Ovary (tissue), 10 donors: ENCODE measurements at regions of chr3 and their contacts with region 1.

Region 1: DNA sequence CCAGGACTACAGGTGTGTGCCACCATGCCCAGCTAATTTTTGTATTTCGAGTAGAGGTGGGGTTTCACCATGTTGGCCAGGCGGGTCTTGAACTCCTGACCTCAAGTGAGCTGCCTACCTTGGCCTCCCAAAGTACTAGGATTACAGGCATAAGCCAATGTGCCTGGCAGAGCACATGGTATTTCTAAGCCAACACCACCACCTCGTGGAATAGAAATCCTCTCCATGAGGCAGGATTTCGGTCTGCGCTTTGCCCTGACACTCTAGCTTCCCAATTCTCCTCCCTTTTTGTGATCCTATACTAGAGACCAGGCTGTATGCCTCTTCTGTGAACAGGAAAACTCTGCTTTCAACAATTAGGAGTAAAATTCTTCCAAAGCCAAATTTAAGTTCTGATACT is 372.2 kb downstream of the VGLL3 start:
- DNase-seq: no peak
- H3K4me3 ChIP-seq: no peak overlapping the region
- H3K27ac ChIP-seq: no peak overlapping the region
- H3K4me1 ChIP-seq: no peaks in the 10 kb centered on the region
- H3K27me3 ChIP-seq: no peaks in the 10 kb centered on the region
- CTCF ChIP-seq: no peak
- EP300 ChIP-seq: no peak
- POLR2A ChIP-seq: no peak

Region 2: GRCh38 chr3:86605166-86605565 is 13.5 kb before region 1 on chr3:
- intact Hi-C with region 1: loop called in 1 of 4 experiments (anchors 1 kb)
- DNase-seq: no peak
- H3K4me3 ChIP-seq: no peak overlapping the region
- H3K27ac ChIP-seq: no peak overlapping the region
- H3K4me1 ChIP-seq: no peaks in the 10 kb centered on the region
- H3K27me3 ChIP-seq: no peaks in the 10 kb centered on the region
- CTCF ChIP-seq: no peak
- EP300 ChIP-seq: no peak
- POLR2A ChIP-seq: no peak

Region 3: GRCh38 chr3:87006844-87007439 is 388.2 kb after region 1 on chr3:
- intact Hi-C with region 1: no loop called
- DNase-seq: no peak
- H3K4me3 ChIP-seq: no peak overlapping the region
- H3K27ac ChIP-seq: no peak overlapping the region
- H3K4me1 ChIP-seq: no peaks in the 10 kb centered on the region
- H3K27me3 ChIP-seq: no peaks in the 10 kb centered on the region
- CTCF ChIP-seq: no peak
- EP300 ChIP-seq: no peak
- POLR2A ChIP-seq: no peak